ENCODE measurements at regions of chr11 and their contacts with region 1.

Region 1: DNA sequence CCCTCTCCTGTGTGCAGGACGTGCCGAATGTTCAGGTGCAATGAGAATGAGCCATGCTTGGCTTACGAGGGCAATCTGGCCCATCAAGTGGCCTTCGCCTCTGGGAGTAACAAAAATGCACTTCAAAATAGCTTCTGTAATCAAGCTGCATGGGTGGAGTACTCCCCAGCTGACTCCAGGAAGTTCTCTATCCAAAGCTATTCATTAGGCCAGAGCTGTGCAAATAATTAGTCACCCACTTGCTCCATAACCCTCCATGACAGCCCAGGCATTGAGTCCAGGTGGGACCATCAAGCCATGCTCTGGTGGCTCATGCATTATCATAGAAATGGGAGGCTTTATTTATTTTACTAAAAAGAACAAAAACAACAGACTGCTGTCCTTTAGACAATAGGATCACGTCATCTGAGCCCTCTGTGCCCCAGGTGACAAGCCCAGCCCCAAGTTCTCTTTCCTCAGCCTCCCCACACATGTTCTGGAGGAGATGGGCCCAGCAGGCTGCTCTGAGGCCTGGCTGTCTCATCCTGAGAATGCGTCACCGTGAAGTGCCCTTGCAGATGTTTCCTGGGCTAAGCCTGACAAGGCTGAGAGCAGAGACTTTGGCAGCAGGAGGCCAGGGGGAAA is 244.7 kb downstream of the ETS1 start:
- DNase-seq: peak; percentile 98
- H3K4me3 ChIP-seq: no peak overlapping the region
- H3K27ac ChIP-seq: peak overlapping the region; percentile 83
- H3K4me1 ChIP-seq: peaks cover 31% of the 10 kb centered on the region
- H3K27me3 ChIP-seq: no peaks in the 10 kb centered on the region
- CTCF ChIP-seq: no peak
- POLR2A ChIP-seq: peak; percentile 47

Region 2: GRCh38 chr11:128172046-128172878 is 170.4 kb before region 1 on chr11:
- CTCF ChIA-PET with region 1: interaction called, 5 read pairs
- POLR2A ChIA-PET with region 1: no interaction called
- dilution Hi-C with region 1: no loop called
- intact Hi-C with region 1: loop called (anchors 2 kb)
- DNase-seq: peak; percentile 91
- H3K4me3 ChIP-seq: no peak overlapping the region
- H3K27ac ChIP-seq: peak overlapping the region; percentile 42
- H3K4me1 ChIP-seq: peaks cover 9% of the 10 kb centered on the region
- H3K27me3 ChIP-seq: no peaks in the 10 kb centered on the region
- CTCF ChIP-seq: peak; percentile 64 to 74
- POLR2A ChIP-seq: no peak

Region 3: GRCh38 chr11:128195057-128195751 is 147.4 kb before region 1 on chr11:
- CTCF ChIA-PET with region 1: no interaction called
- POLR2A ChIA-PET with region 1: no interaction called
- dilution Hi-C with region 1: no loop called
- intact Hi-C with region 1: loop called (anchors 1 kb)
- DNase-seq: peak; percentile 98
- H3K4me3 ChIP-seq: no peak overlapping the region
- H3K27ac ChIP-seq: peak overlapping the region; percentile 65
- H3K4me1 ChIP-seq: peaks cover 12% of the 10 kb centered on the region
- H3K27me3 ChIP-seq: no peaks in the 10 kb centered on the region
- CTCF ChIP-seq: peak in 1 of 2 donors; percentile 9
- POLR2A ChIP-seq: peak; percentile 60

Region 4: GRCh38 chr11:128328955-128329551 is 13.6 kb before region 1 on chr11:
- CTCF ChIA-PET with region 1: interaction called, 7 read pairs
- POLR2A ChIA-PET with region 1: no interaction called
- dilution Hi-C with region 1: no loop called
- intact Hi-C with region 1: loop called (anchors 1 kb)
- DNase-seq: peak; percentile 93
- H3K4me3 ChIP-seq: no peak overlapping the region
- H3K27ac ChIP-seq: peak overlapping the region; percentile 57
- H3K4me1 ChIP-seq: peaks cover 32% of the 10 kb centered on the region
- H3K27me3 ChIP-seq: no peaks in the 10 kb centered on the region
- CTCF ChIP-seq: no peak
- POLR2A ChIP-seq: peak; percentile 26

Region 5: GRCh38 chr11:128365044-128365443 is 22.4 kb after region 1 on chr11:
- CTCF ChIA-PET with region 1: no interaction called
- POLR2A ChIA-PET with region 1: no interaction called
- dilution Hi-C with region 1: no loop called
- intact Hi-C with region 1: no loop called
- DNase-seq: peak; percentile 55
- H3K4me3 ChIP-seq: no peak overlapping the region
- H3K27ac ChIP-seq: no peak overlapping the region
- H3K4me1 ChIP-seq: peaks cover 3% of the 10 kb centered on the region
- H3K27me3 ChIP-seq: no peaks in the 10 kb centered on the region
- CTCF ChIP-seq: no peak
- POLR2A ChIP-seq: no peak

Region 6: DNA sequence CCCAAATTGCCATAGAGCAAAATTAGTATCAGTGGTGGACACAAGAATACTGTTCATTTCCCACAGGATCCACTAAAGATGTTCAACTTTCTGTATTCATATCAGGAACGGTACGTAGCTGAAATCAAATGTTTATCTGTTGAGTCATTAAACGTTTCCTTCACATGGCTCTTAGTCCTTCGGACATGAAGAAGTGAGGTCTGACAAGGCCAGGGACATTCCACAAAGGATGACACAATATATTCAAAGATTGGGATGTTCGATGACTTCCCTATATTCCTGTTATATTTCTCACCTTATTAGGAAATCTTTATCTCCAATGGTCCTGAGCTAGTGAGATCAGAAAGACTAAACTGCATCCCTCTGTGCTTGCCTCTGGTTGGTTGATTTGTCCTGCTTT is 115.7 kb after region 1 on chr11:
- CTCF ChIA-PET with region 1: no interaction called
- POLR2A ChIA-PET with region 1: no interaction called
- dilution Hi-C with region 1: no loop called
- intact Hi-C with region 1: loop called (anchors 2 kb)
- DNase-seq: peak; percentile 62
- H3K4me3 ChIP-seq: no peak overlapping the region
- H3K27ac ChIP-seq: peak overlapping the region; percentile 61
- H3K4me1 ChIP-seq: peaks cover 11% of the 10 kb centered on the region
- H3K27me3 ChIP-seq: no peaks in the 10 kb centered on the region
- CTCF ChIP-seq: no peak
- POLR2A ChIP-seq: no peak

Region 7: GRCh38 chr11:128552783-128553661 is 210.4 kb after region 1 on chr11:
- CTCF ChIA-PET with region 1: no interaction called
- POLR2A ChIA-PET with region 1: interaction called, 3 read pairs
- dilution Hi-C with region 1: no loop called
- intact Hi-C with region 1: loop called (anchors 1 kb)
- DNase-seq: no peak
- H3K4me3 ChIP-seq: no peak overlapping the region
- H3K27ac ChIP-seq: no peak overlapping the region
- H3K4me1 ChIP-seq: peaks cover 11% of the 10 kb centered on the region
- H3K27me3 ChIP-seq: peaks cover 4 to 6% of the 10 kb centered on the region in 2 experiments
- CTCF ChIP-seq: no peak
- POLR2A ChIP-seq: no peak

Region 8: GRCh38 chr11:128595221-128595620 is 252.6 kb after region 1 on chr11:
- CTCF ChIA-PET with region 1: no interaction called
- POLR2A ChIA-PET with region 1: no interaction called
- dilution Hi-C with region 1: no loop called
- intact Hi-C with region 1: loop called (anchors 1 kb)
- DNase-seq: peak; percentile 93
- H3K4me3 ChIP-seq: no peak overlapping the region
- H3K27ac ChIP-seq: no peak overlapping the region
- H3K4me1 ChIP-seq: peaks cover 9% of the 10 kb centered on the region
- H3K27me3 ChIP-seq: peaks cover 17 to 20% of the 10 kb centered on the region in 2 experiments
- CTCF ChIP-seq: no peak
- POLR2A ChIP-seq: no peak

Measured in endothelial cell of umbilical vein (primary cell).